ENCODE measurements at regions of chr2 and their contacts with region 1.

Region 1: DNA sequence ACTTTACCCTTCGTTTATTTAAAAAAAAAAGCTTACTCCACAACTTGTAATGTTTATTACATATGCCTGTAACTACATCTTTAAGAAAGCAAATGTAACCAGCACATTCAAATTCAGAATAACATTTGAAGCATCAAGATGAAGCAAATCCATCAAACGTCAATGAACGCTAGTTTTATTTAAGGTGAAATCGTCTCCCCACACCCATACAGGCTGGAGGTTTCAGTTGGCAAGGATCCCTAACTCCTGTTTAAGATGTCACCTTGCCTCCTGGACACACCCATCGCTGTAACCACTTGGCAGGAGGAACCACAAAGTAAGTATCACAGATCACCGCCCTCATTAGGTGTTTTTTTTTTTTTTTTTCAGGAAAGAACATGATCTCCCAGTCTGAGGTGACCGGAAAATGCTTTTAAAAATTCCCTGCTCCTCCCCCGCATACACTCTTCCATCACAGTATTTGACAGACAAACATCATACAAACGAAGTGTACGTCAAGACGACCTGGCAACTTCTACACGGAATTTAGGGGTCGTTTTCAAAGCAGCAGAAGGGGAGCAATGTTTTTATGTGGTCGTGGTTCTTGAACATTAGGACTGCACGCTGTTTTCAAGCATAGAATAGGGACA is 19.7 kb upstream of the STPG4 start:
- DNase-seq: peak; percentile 67

Region 2: DNA sequence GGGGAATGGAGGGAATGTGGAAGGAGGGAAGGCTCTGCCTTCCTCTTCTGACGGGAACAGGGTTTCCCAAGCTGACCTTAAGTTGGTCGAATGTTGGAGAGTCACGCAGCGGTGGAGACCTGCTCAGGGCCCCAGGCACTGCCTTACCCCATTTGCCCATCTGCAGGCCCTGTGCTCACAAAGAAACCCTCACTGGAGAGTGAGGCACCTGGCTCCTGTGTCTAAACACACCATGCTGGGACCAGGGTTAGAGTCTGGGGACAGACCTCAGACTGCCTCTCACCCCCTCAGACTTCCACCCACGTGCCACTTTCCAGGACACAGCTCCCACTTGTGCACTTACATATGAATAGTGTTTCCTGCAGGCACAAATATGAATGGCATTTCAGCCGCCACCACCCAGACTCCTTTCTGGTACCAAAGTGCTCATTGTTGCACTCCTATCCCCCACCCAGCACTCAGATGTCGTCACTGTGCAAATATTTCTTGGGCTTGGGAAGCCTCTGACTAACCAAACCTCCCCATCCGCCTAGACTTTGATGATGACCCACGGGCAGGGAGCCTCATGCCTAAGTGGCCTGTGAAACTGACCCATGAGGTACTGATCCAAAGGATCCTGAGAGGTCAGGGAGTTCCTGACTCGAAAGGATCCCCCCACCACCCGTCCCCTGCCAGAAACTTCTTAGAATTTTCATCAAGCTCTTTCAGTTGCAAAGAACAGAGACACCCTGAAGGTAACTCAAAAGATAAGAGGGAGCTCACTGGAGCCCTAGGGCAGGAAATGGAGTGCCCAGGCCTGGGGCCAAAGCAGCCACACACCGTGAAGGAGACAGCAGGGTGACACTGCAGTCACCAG is 98.0 kb before region 1 on chr2:
- in situ Hi-C with region 1: no loop called
- DNase-seq: peak; percentile 98

Region 3: GRCh38 chr2:47299555-47299954 is 124.7 kb after region 1 on chr2:
- in situ Hi-C with region 1: loop called (anchors 25 kb)
- DNase-seq: peak; percentile 29

Region 4: DNA sequence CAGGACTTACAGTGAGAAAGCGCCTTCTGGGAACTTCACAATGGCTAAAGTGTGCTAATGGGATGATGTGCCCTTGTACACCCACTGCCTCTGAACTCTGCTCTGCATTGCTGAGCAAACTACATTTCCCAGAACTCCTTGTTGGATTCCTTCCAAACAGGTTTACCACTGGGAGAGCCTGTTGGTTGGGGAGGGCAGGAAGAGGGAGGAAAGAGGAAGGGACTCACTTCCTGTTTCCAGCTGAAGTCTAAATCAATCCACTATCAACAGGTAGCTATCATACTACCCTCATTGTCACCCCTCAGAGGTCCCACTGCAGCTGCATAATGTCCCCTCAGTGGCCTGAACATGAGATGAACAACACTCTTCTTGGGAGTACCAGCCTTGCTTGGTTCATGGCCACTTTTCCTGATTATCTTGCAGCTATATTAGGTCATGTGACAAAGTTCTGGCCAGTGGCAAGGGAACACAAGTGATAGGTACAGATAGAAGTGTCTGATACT is 337.8 kb after region 1 on chr2:
- in situ Hi-C with region 1: no loop called
- DNase-seq: no peak

Measured in ACHN (cell line).